K562 (cell line): ENCODE measurements at regions of chr12 and their contacts with region 1.

Region 1: GRCh38 chr12:14952299-14952921 is 9.0 kb downstream of the ARHGDIB start:
- DNase-seq: no peak
- ATAC-seq: no peak
- H3K4me3 ChIP-seq: no peak overlapping the region
- H3K27ac ChIP-seq: no peak overlapping the region
- H3K4me1 ChIP-seq: no peaks in the 10 kb centered on the region; a peak in 2 of 5 replicates
- H3K27me3 ChIP-seq: no peaks in the 10 kb centered on the region
- CTCF ChIP-seq: no peak
- EP300 ChIP-seq: no peak
- POLR2A ChIP-seq: no peak
- RAD21 ChIP-seq: no peak

Region 2: DNA sequence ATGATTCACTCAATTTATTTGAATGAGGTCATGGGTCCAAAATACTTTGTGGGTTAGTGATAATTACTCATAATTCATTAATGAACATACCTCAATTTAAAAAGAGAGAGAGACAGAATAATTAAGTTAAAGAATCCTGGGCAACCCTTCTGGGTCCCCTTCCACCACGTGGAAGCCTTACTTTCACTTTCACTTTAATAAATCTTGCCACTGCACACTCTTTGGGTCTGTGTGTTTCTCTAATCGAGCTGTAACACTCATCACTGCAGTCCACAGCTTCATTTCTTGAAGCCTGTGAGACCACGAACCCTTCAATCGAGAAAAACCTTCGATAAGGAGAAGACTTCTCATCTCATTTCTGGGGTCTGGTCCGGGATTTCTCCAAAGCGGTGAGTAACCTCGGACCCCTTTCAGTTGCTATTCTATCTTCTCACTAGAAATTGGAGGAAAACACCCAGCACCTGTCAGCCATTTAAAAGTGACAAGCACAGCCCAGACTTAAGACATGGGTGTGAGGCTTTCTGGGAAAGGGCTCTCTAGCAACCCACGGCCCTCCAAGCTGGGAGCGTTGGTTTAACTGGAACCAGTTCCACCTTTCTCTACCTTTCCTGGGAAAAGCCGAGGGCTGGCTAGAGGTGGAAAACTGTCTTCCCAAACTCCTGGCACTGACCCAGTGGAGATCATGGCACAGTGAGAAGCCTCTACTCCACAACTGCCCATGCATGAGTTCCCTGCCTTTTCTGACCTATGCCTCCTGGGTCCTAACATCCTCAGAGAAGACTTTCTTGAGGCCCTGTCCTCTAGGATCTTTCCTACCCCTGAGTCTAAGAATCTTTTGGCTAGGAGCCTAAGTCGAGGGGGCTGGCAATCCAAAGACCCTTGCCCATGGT is 735.8 kb before region 1 on chr12:
- CTCF ChIA-PET with region 1: no interaction called
- POLR2A ChIA-PET with region 1: no interaction called
- in situ Hi-C with region 1: loop called (anchors 25 kb)
- intact Hi-C with region 1: no loop called
- DNase-seq: peak in 1 of 4 experiments; percentile 11
- ATAC-seq: peak; percentile 55; the same call in 2 of the 3 replicates
- H3K4me3 ChIP-seq: 0 out of 2 replicates have a peak overlapping the region, but pooled peaks have one; percentile 7
- H3K27ac ChIP-seq: no peak overlapping the region
- H3K4me1 ChIP-seq: 0 out of 5 replicates have a peak, but pooled peaks cover 0 to 2% of the 10 kb centered on the region in 2 experiments
- H3K27me3 ChIP-seq: no peaks in the 10 kb centered on the region
- CTCF ChIP-seq: no peak
- EP300 ChIP-seq: no peak
- POLR2A ChIP-seq: no peak
- RAD21 ChIP-seq: no peak

Region 3: GRCh38 chr12:14995583-14996425 is 43.4 kb after region 1 on chr12:
- CTCF ChIA-PET with region 1: no interaction called
- POLR2A ChIA-PET with region 1: no interaction called
- in situ Hi-C with region 1: no loop called
- intact Hi-C with region 1: no loop called
- DNase-seq: peak; percentile 6 to 49 (median 12)
- ATAC-seq: no peak
- H3K4me3 ChIP-seq: no peak overlapping the region
- H3K27ac ChIP-seq: no peak overlapping the region
- H3K4me1 ChIP-seq: no peaks in the 10 kb centered on the region
- H3K27me3 ChIP-seq: no peaks in the 10 kb centered on the region
- CTCF ChIP-seq: peak in 2 of 3 experiments; percentile 37 to 69; a peak in 3 of 6 replicates
- EP300 ChIP-seq: no peak
- POLR2A ChIP-seq: no peak
- RAD21 ChIP-seq: peak; percentile 63 to 75

Region 4: DNA sequence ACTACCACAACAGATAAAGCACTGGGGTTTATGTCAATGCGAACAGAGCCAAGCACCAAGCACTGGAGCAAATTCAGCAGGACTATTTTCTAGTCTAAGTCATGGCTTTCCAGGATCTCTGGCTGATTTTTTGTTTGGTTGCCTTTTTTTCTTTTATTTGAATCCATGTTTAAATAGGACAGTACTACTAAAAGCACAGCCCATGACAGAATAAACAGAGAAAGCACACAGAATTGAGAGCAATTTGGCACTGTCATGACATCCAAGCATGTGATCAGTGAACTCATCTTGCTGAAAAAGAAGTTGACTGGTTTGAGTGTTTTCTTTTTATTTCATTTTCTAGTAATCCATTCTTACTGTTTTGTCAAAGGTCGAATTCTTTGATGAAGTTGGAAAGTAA is 291.9 kb after region 1 on chr12:
- CTCF ChIA-PET with region 1: no interaction called
- POLR2A ChIA-PET with region 1: no interaction called
- in situ Hi-C with region 1: no loop called
- intact Hi-C with region 1: no loop called
- DNase-seq: no peak
- ATAC-seq: no peak
- H3K4me3 ChIP-seq: no peak overlapping the region
- H3K27ac ChIP-seq: no peak overlapping the region
- H3K4me1 ChIP-seq: no peaks in the 10 kb centered on the region
- H3K27me3 ChIP-seq: no peaks in the 10 kb centered on the region
- CTCF ChIP-seq: no peak
- EP300 ChIP-seq: no peak
- POLR2A ChIP-seq: no peak
- RAD21 ChIP-seq: no peak